ENCODE measurements at regions of chr19 and their contacts with region 1.

Region 1: GRCh38 chr19:54463531-54464043 is at the start of gene LENG9:
- DNase-seq: peak; percentile 96
- H3K4me3 Mint-ChIP-seq: peak within 1 kb of the TSS; percentile 84
- H3K27ac Mint-ChIP-seq: peak within 1 kb of the TSS; percentile 89
- H3K4me1 Mint-ChIP-seq: peaks cover 25% of the 10 kb centered on the region
- H3K27me3 Mint-ChIP-seq: peaks cover 21% of the 10 kb centered on the region
- total RNA-seq, gene LENG9: 8.4 and 11.5 TPM in 2 replicates

Region 2: GRCh38 chr19:54430306-54431254 is 33.0 kb before region 1 on chr19:
- intact Hi-C with region 1: loop called (anchors 1 kb)
- DNase-seq: peak; percentile 22
- H3K4me3 Mint-ChIP-seq: peak overlapping the region; percentile 45
- H3K27ac Mint-ChIP-seq: no peak overlapping the region
- H3K4me1 Mint-ChIP-seq: peaks cover 12% of the 10 kb centered on the region
- H3K27me3 Mint-ChIP-seq: peaks cover 12% of the 10 kb centered on the region

Region 3: GRCh38 chr19:54480051-54480450 is 16.5 kb after region 1 on chr19:
- intact Hi-C with region 1: no loop called
- DNase-seq: no peak
- H3K4me3 Mint-ChIP-seq: no peak overlapping the region
- H3K27ac Mint-ChIP-seq: no peak overlapping the region
- H3K4me1 Mint-ChIP-seq: peaks cover 14% of the 10 kb centered on the region
- H3K27me3 Mint-ChIP-seq: peaks cover 12% of the 10 kb centered on the region

Region 4: DNA sequence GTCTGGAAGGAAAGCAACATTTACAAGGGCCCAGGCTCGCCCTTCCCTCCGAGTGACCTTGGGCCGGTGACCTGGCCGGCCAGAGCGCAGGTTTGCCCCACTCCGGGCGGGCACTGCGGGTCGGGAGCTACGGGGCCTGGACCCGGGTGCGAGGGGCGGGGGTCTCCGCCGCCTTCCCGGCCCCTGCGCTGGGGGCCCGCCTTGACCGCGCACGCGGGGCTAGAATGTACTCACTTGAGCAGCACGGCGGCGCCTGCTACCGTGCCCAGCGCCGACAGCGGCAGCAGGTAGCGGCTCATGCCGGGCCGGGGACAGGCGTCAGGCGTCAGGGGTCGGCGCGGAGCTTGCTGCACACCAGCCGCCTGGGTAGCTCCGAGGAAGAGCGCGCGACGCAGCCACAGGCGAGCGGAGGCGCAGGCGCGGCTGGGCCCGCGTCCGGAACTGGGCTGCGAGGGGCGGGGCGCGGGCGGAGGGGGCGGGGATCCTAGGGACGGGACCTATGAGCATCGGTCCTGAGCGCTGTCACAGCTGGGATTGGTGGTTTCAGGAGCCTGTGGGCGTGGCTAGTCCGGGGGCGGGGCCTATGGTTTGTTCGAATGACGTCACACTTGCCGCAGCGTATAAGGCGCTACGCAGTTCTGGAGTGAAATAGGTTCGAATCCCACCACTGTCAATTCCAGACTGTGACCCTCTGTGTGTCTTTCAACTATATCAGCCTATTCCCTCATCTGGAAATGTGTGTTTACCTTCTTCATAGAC is 599.3 kb after region 1 on chr19 and contains the start of gene RDH13:
- intact Hi-C with region 1: loop called (anchors 1 kb)
- DNase-seq: peak; percentile 96
- H3K4me3 Mint-ChIP-seq: peak within 1 kb of the TSS; percentile 89
- H3K27ac Mint-ChIP-seq: peak within 1 kb of the TSS; percentile 75
- H3K4me1 Mint-ChIP-seq: peaks cover 12% of the 10 kb centered on the region
- H3K27me3 Mint-ChIP-seq: peaks cover 18% of the 10 kb centered on the region
- total RNA-seq, gene RDH13: 21.7 and 26.4 TPM in 2 replicates

Region 5: DNA sequence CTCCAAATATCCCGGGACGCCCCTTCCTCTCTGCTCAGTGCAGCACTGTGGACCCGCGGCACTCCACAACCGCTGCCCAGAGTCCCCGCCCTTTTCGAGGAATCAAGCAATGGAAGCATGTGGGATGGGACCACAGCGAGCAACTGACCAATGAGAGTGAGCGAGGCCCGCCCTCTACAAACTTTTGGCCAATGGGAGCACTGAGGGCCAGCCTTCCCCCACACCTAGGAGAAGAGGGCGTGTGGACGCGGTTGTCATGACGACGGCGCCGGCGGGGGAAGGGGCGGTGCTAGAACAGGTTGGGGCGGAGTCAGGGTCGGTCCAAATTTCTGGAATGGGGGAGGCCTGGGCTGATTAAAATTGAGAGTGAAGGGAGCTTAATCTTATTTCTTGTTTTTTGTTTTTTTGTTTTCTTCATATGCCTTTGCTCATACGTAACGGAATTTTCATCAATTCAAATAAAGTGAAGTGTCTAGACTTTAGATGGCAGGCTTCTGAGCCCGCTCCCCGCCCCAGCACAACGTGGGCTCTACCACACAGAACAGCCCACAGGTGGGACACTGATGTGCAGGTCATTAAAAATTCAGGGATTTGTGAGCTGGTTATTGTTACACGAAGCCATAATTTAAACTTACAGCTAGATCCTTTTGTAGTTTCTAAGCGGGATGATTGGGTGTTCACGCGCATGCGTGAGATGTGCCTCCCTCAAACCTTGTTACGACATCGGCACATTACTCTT is 703.1 kb after region 1 on chr19 and contains the start of gene DNAAF3:
- intact Hi-C with region 1: loop called (anchors 2 kb)
- DNase-seq: peak; percentile 76
- H3K4me3 Mint-ChIP-seq: peak within 1 kb of the TSS; percentile 84
- H3K27ac Mint-ChIP-seq: peak within 1 kb of the TSS; percentile 32
- H3K4me1 Mint-ChIP-seq: peaks cover 12% of the 10 kb centered on the region
- H3K27me3 Mint-ChIP-seq: peaks cover 57% of the 10 kb centered on the region
- total RNA-seq, gene DNAAF3: 0.36 TPM in 1 of 2 replicates, not detected in the other

Region 6: GRCh38 chr19:55643348-55644176 is 1180.0 kb after region 1 on chr19 and contains the start of gene ZNF581:
- intact Hi-C with region 1: loop called (anchors 10 kb)
- DNase-seq: peak; percentile 77
- H3K4me3 Mint-ChIP-seq: peak within 1 kb of the TSS; percentile 100
- H3K27ac Mint-ChIP-seq: peak within 1 kb of the TSS; percentile 99
- H3K4me1 Mint-ChIP-seq: peaks cover 43% of the 10 kb centered on the region
- H3K27me3 Mint-ChIP-seq: no peaks in the 10 kb centered on the region
- total RNA-seq, gene ZNF581: 35.6 and 36.4 TPM in 2 replicates